Gastrocnemius medialis (tissue), 4 donors: ENCODE measurements at regions of chr16 and their contacts with region 1.

Region 1: GRCh38 chr16:18801197-18801972 is at the start of gene ARL6IP1:
- DNase-seq: peak; percentile 99 to 100
- ATAC-seq: peak; percentile 93
- H3K4me3 ChIP-seq: peak within 1 kb of the TSS; percentile 91 to 96 (median 94)
- H3K27ac ChIP-seq: peak within 1 kb of the TSS; percentile 90 to 96 (median 94)
- H3K4me1 ChIP-seq: peaks cover 53 to 64% of the 10 kb centered on the region in 2 donors
- H3K27me3 ChIP-seq: no peaks in the 10 kb centered on the region
- CTCF ChIP-seq: peak; percentile 90 to 94 (median 92)
- POLR2A ChIP-seq: peak; percentile 99 to 100
- total RNA-seq, gene ARL6IP1: 25.2 to 40.5 (median 37.5) TPM

Region 2: GRCh38 chr16:18789850-18790724 is 11.3 kb before region 1 on chr16 and contains the start of gene RPS15A:
- in situ Hi-C with region 1: no loop called
- intact Hi-C with region 1: loop called (anchors 1 kb)
- DNase-seq: peak; percentile 94 to 96
- ATAC-seq: peak; percentile 96 to 98
- H3K4me3 ChIP-seq: peak within 1 kb of the TSS; percentile 83 to 98 (median 86)
- H3K27ac ChIP-seq: peak within 1 kb of the TSS; percentile 87 to 96 (median 90)
- H3K4me1 ChIP-seq: peaks cover 40 to 48% of the 10 kb centered on the region in 2 donors
- H3K27me3 ChIP-seq: no peaks in the 10 kb centered on the region
- CTCF ChIP-seq: no peak
- POLR2A ChIP-seq: peak; percentile 86 to 89
- total RNA-seq, gene RPS15A: 1,340 to 2,259 (median 1,706) TPM

Region 3: GRCh38 chr16:18932243-18932981 is 131.0 kb after region 1 on chr16:
- in situ Hi-C with region 1: no loop called
- intact Hi-C with region 1: loop called (anchors 5 kb)
- DNase-seq: peak; percentile 75 to 76
- ATAC-seq: peak; percentile 75 to 80
- H3K4me3 ChIP-seq: peak overlapping the region; percentile 1 to 22 (median 11)
- H3K27ac ChIP-seq: peak overlapping the region; percentile 90 to 95 (median 91)
- H3K4me1 ChIP-seq: peaks cover 24 to 30% of the 10 kb centered on the region in 2 donors
- H3K27me3 ChIP-seq: no peaks in the 10 kb centered on the region
- CTCF ChIP-seq: no peak
- POLR2A ChIP-seq: peak in 1 of 2 donors; percentile 38

Region 4: GRCh38 chr16:18969050-18969854 is 167.9 kb after region 1 on chr16:
- in situ Hi-C with region 1: loop called in 1 of 4 experiments (anchors 10 kb)
- intact Hi-C with region 1: loop called (anchors 1 kb)
- DNase-seq: peak; percentile 65 to 79
- ATAC-seq: peak; percentile 80 to 95
- H3K4me3 ChIP-seq: peak overlapping the region; percentile 38 to 44 (median 42)
- H3K27ac ChIP-seq: peak overlapping the region in 1 of 4 donors; percentile 9
- H3K4me1 ChIP-seq: peaks cover 0 to 4% of the 10 kb centered on the region in 2 donors
- H3K27me3 ChIP-seq: no peaks in the 10 kb centered on the region
- CTCF ChIP-seq: peak; percentile 76 to 94 (median 92)
- POLR2A ChIP-seq: no peak

Region 5: GRCh38 chr16:19203374-19204031 is 402.1 kb after region 1 on chr16:
- in situ Hi-C with region 1: no loop called
- intact Hi-C with region 1: no loop called
- DNase-seq: no peak
- ATAC-seq: no peak
- H3K4me3 ChIP-seq: no peak overlapping the region
- H3K27ac ChIP-seq: no peak overlapping the region
- H3K4me1 ChIP-seq: no peaks in the 10 kb centered on the region
- H3K27me3 ChIP-seq: no peaks in the 10 kb centered on the region
- CTCF ChIP-seq: no peak
- POLR2A ChIP-seq: no peak